ENCODE measurements at regions of chr11 and their contacts with region 1.

Region 1: GRCh38 chr11:65013692-65014145 is 241 bp upstream of the ARL2 start:
- DNase-seq: peak; percentile 80 to 81
- H3K4me3 ChIP-seq: peak overlapping the region; percentile 68 to 85 (median 84)
- H3K27ac ChIP-seq: peak overlapping the region; percentile 96 to 98
- H3K4me1 ChIP-seq: no peaks in the 10 kb centered on the region
- H3K27me3 ChIP-seq: no peaks in the 10 kb centered on the region
- CTCF ChIP-seq: peak in 2 of 3 donors; percentile 3 to 88
- POLR2A ChIP-seq: peak; percentile 20

Region 2: GRCh38 chr11:64854534-64855429 is 158.9 kb before region 1 on chr11:
- intact Hi-C with region 1: loop called (anchors 10 kb)
- DNase-seq: peak; percentile 68 to 81
- H3K4me3 ChIP-seq: peak overlapping the region in 1 of 3 donors; percentile 26
- H3K27ac ChIP-seq: peak overlapping the region; percentile 83 to 85
- H3K4me1 ChIP-seq: peaks cover 16 to 25% of the 10 kb centered on the region in 2 donors
- H3K27me3 ChIP-seq: no peaks in the 10 kb centered on the region
- CTCF ChIP-seq: no peak
- POLR2A ChIP-seq: no peak

Measured in breast epithelium (tissue), 4 donors.